PC-3 (cell line): ENCODE measurements at regions of chr3 and their contacts with region 1.

Region 1: DNA sequence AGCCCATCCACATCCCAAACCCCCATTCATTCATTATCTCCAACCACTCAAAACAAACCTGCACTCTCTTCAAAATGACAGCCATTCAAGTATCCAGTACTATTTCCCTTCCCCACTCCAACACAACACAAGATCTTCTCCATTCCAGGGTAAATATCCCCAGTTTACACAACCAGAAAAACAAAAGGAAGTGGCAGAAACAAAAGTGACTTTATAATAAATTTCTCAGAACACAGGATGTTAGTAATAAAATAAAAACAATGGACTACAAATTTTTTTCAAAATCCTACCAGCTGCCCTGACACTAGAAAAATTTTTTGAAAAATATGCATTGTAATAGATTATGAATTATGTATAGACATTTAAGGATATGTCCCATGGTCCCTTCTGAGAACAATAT is 14.2 kb downstream of the CPA3 start:
- DNase-seq: no peak
- ATAC-seq: no peak
- H3K4me3 ChIP-seq: no peak overlapping the region
- H3K27ac ChIP-seq: no peak overlapping the region
- H3K4me1 ChIP-seq: no peaks in the 10 kb centered on the region; the same call in 1 of the 2 replicates
- H3K27me3 ChIP-seq: peaks cover 21% of the 10 kb centered on the region
- CTCF ChIP-seq: no peak

Region 2: DNA sequence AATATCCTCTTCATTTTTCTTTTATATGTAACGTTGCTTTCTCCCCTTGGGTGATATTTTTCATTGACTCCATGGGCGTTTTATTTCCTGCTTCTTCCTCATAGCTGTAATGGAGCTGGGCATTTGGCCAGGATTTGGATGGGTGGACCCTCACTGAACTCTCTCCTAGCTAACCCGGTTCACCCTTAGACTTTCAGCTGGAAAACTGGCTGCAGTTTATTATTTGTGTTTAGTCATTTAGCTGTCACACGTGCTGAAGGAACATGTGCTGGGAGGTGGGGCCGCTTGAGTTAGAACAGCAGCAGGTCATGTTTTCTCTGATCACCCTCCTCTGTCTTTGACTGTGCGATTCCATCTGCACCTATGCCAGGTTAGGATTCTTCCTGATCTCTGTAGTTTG is 1062.5 kb before region 1 on chr3:
- CTCF ChIA-PET with region 1: no interaction called
- POLR2A ChIA-PET with region 1: no interaction called
- intact Hi-C with region 1: loop called (anchors 5 kb)
- DNase-seq: peak; percentile 43
- ATAC-seq: no peak
- H3K4me3 ChIP-seq: no peak overlapping the region
- H3K27ac ChIP-seq: no peak overlapping the region
- H3K4me1 ChIP-seq: no peaks in the 10 kb centered on the region
- H3K27me3 ChIP-seq: no peaks in the 10 kb centered on the region
- CTCF ChIP-seq: no peak

Region 3: DNA sequence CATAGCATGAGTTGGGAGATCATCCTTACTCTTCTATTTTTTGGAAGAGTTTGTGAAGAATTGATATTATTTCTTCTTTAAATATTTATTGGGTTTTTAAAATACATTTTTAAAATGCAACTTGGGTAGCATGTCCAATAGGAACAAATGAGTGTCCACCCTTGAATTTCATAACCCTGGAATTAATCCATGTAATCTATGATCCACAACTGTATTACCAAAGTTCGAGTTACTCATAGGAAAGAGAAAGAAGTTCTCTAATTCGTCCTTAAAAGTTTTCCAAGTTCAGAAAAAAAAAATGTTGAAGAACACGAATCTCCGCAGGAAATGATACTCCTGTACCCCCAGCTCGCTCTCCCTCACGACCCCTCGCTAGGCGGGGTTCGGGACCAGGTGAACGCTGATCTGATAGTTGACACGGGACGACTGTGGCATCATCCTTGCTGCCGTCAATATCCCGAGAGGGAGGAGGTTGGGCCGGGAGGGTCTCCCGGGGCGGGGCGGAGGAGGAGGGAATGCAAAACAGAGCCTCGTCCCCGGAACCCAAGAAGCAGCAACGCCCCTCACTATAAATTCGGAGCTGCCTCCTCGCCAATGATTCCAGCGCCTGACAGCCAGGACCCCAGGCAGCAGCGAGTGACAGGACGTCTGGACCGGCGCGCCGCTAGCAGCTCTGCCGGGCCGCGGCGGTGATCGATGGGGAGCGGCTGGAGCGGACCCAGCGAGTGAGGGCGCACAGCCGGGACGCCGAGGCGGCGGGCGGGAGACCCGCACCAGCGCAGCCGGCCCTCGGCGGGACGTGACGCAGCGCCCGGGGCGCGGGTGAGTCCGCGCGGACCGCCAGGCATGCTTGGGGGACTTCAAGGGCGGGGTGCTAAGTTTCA is 181.7 kb before region 1 on chr3 and contains the start of gene AGTR1:
- CTCF ChIA-PET with region 1: no interaction called
- POLR2A ChIA-PET with region 1: no interaction called
- intact Hi-C with region 1: no loop called
- DNase-seq: no peak
- ATAC-seq: peak; percentile 40; the same call in 1 of the 2 replicates
- H3K4me3 ChIP-seq: peak within 1 kb of the TSS; percentile 50
- H3K27ac ChIP-seq: no peak within 1 kb of the TSS
- H3K4me1 ChIP-seq: no peaks in the 10 kb centered on the region
- H3K27me3 ChIP-seq: peaks cover 46% of the 10 kb centered on the region
- CTCF ChIP-seq: no peak
- total RNA-seq, gene AGTR1: 0.15 TPM in 1 of 2 replicates, not detected in the other

Region 4: GRCh38 chr3:148991194-148992026 is 112.2 kb after region 1 on chr3 and contains the start of gene GYG1:
- CTCF ChIA-PET with region 1: no interaction called
- POLR2A ChIA-PET with region 1: no interaction called
- intact Hi-C with region 1: no loop called
- DNase-seq: peak; percentile 82
- ATAC-seq: peak; percentile 87
- H3K4me3 ChIP-seq: peak within 1 kb of the TSS; percentile 92
- H3K27ac ChIP-seq: peak within 1 kb of the TSS; percentile 31; the same call in 1 of the 2 replicates
- H3K4me1 ChIP-seq: peaks cover 14% of the 10 kb centered on the region
- H3K27me3 ChIP-seq: no peaks in the 10 kb centered on the region
- CTCF ChIP-seq: peak; percentile 60
- total RNA-seq, gene GYG1: 9.9 and 12.0 TPM in 2 replicates